Common myeloid progenitor, CD34-positive (primary cell): ENCODE measurements at regions of chr4 and their contacts with region 1.

Region 1: DNA sequence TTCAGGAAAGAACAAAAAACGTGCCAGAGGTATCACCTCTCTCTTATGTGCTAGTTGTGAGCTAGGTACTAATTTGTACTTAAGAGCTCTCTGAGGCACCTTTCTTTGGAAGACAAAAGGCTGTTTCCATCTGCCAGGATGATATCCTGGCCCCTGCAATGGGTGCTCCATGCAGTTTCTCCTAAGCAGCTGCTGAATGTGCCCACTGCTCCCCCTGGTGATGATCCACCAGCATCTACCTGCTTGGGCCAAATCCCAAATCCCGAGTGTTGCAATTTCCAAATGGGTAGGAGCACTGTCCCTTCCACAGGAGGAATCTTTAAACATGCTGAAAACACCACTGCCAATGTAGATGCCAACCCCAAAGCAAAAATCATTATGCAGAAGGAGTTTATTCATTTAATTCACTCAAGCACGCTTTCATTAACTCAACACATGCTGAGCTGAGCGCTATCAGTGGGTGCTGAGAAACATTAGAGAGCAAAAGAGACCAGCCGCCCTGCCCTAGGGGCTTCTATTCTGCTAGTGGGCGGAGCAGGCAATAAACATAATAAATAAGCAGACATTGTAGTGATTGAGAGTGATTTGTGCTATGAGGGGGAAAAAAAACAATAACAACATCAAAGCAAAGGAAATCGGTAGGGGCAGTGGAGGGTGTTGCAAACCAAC is 69.6 kb upstream of the C4orf50 start:
- DNase-seq: peak; percentile 30 to 49 (median 34)
- H3K4me3 ChIP-seq: no peak overlapping the region
- H3K27ac ChIP-seq: no peak overlapping the region
- H3K4me1 ChIP-seq: peaks cover 0 to 10% (median 2%) of the 10 kb centered on the region in 4 experiments
- H3K27me3 ChIP-seq: peaks cover 0 to 6% (median 0%) of the 10 kb centered on the region in 5 experiments

Region 2: DNA sequence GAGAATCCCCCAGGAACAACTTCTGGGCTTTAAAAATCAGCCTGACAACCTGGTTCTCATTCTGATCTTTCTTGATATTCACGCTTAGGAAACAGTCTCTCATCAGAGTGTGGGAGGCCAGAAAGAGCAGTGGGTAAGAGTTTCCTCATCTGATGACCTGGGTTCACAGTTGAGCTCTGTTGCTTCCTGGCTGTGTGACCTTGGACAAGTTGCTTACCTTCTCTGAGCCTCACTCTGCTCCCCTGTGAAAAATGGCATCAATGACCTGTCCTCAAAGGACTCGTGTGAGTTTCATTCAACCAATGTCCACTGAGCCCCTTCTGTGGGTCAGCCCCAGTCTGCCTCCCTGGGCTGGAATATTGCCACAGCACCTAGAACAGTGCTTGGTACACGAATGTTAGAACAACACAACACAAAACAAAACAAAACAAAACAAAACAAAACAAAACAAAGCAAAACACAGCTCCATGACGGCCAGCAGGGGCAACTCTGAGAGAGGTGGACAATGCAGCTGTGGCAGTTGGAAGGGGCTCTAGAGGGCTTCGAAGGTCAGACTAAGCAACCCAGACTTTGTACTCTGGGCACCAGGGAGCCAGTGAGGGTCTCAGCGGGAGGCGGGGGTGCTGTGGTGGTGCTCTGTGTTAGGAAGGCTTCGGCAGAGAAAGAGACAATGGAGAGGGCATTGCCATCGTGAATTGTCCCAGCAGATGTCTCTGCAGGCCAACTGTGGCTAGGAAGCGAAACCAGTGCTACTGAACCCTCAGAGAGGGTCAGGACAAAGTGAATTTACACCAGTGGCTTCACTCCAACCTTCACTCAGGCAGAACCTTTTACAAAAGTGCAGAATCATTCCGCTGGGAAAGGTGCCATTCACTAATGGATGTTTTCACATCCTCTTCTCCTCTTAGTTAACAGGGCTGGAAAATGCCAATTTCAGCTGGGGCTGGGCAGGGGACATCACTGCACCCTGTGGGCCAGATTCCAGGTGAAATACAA is 55.3 kb before region 1 on chr4:
- CTCF ChIA-PET with region 1: interaction called, 12 read pairs
- POLR2A ChIA-PET with region 1: no interaction called
- DNase-seq: peak; percentile 78 to 84 (median 81)
- H3K4me3 ChIP-seq: no peak overlapping the region
- H3K27ac ChIP-seq: no peak overlapping the region
- H3K4me1 ChIP-seq: peaks cover 0 to 15% (median 3%) of the 10 kb centered on the region in 4 experiments
- H3K27me3 ChIP-seq: peaks cover 0 to 3% (median 0%) of the 10 kb centered on the region in 5 experiments

Region 3: GRCh38 chr4:6065934-6066590 is 21.7 kb before region 1 on chr4:
- CTCF ChIA-PET with region 1: no interaction called
- POLR2A ChIA-PET with region 1: no interaction called
- DNase-seq: no peak
- H3K4me3 ChIP-seq: no peak overlapping the region
- H3K27ac ChIP-seq: no peak overlapping the region
- H3K4me1 ChIP-seq: peaks cover 0 to 24% (median 10%) of the 10 kb centered on the region in 4 experiments
- H3K27me3 ChIP-seq: peaks cover 0 to 5% (median 0%) of the 10 kb centered on the region in 5 experiments